ENCODE measurements at regions of chr17 and their contacts with region 1.

Region 1: GRCh38 chr17:21284319-21285163 is at the start of gene MAP2K3:
- DNase-seq: peak; percentile 96 to 98
- ATAC-seq: peak; percentile 64 to 86 (median 74)
- H3K4me3 ChIP-seq: peak within 1 kb of the TSS; percentile 88
- H3K4me3 Mint-ChIP-seq: peak within 1 kb of the TSS; percentile 96
- H3K27ac ChIP-seq: peak within 1 kb of the TSS; percentile 97
- H3K27ac Mint-ChIP-seq: peak within 1 kb of the TSS; percentile 96 to 99
- H3K4me1 ChIP-seq: peaks cover 69% of the 10 kb centered on the region
- H3K4me1 Mint-ChIP-seq: peaks cover 49 to 74% of the 10 kb centered on the region in 2 donors
- H3K27me3 ChIP-seq: no peaks in the 10 kb centered on the region
- H3K27me3 Mint-ChIP-seq: no peaks in the 10 kb centered on the region
- CTCF ChIP-seq: no peak
- total RNA-seq, gene MAP2K3: 139 to 165 (median 162) TPM

Region 2: GRCh38 chr17:21043286-21044232 is 241.0 kb before region 1 on chr17:
- intact Hi-C with region 1: loop called (anchors 1 kb)
- DNase-seq: peak in 1 of 2 donors; percentile 94
- ATAC-seq: peak; percentile 70 to 90 (median 80)
- H3K4me3 ChIP-seq: peak overlapping the region; percentile 90
- H3K4me3 Mint-ChIP-seq: peak overlapping the region; percentile 88
- H3K27ac ChIP-seq: peak overlapping the region; percentile 100
- H3K27ac Mint-ChIP-seq: peak overlapping the region; percentile 91 to 93
- H3K4me1 ChIP-seq: peaks cover 30% of the 10 kb centered on the region
- H3K4me1 Mint-ChIP-seq: peaks cover 16 to 27% of the 10 kb centered on the region in 2 donors
- H3K27me3 ChIP-seq: no peaks in the 10 kb centered on the region
- H3K27me3 Mint-ChIP-seq: peaks cover 4 to 5% of the 10 kb centered on the region in 2 donors
- CTCF ChIP-seq: peak; percentile 89

Region 3: GRCh38 chr17:21072745-21073197 is 211.8 kb before region 1 on chr17:
- intact Hi-C with region 1: no loop called
- DNase-seq: no peak
- ATAC-seq: no peak
- H3K4me3 ChIP-seq: no peak overlapping the region
- H3K4me3 Mint-ChIP-seq: no peak overlapping the region
- H3K27ac ChIP-seq: no peak overlapping the region
- H3K27ac Mint-ChIP-seq: no peak overlapping the region
- H3K4me1 ChIP-seq: no peaks in the 10 kb centered on the region
- H3K4me1 Mint-ChIP-seq: no peaks in the 10 kb centered on the region
- H3K27me3 ChIP-seq: no peaks in the 10 kb centered on the region
- H3K27me3 Mint-ChIP-seq: peaks cover 0 to 6% of the 10 kb centered on the region in 2 donors
- CTCF ChIP-seq: no peak

Region 4: GRCh38 chr17:21140911-21141310 is 143.6 kb before region 1 on chr17:
- intact Hi-C with region 1: no loop called
- DNase-seq: no peak
- ATAC-seq: no peak
- H3K4me3 ChIP-seq: no peak overlapping the region
- H3K4me3 Mint-ChIP-seq: no peak overlapping the region
- H3K27ac ChIP-seq: no peak overlapping the region
- H3K27ac Mint-ChIP-seq: peak overlapping the region in 1 of 2 donors; percentile 18
- H3K4me1 ChIP-seq: peaks cover 3% of the 10 kb centered on the region
- H3K4me1 Mint-ChIP-seq: peaks cover 11 to 16% of the 10 kb centered on the region in 2 donors
- H3K27me3 ChIP-seq: no peaks in the 10 kb centered on the region
- H3K27me3 Mint-ChIP-seq: no peaks in the 10 kb centered on the region
- CTCF ChIP-seq: no peak

Region 5: GRCh38 chr17:21214015-21214776 is 70.3 kb before region 1 on chr17 and contains the start of gene TMEM11:
- intact Hi-C with region 1: loop called (anchors 1 kb)
- DNase-seq: peak; percentile 96 to 97
- ATAC-seq: peak; percentile 88 to 97 (median 90)
- H3K4me3 ChIP-seq: peak within 1 kb of the TSS; percentile 99
- H3K4me3 Mint-ChIP-seq: peak within 1 kb of the TSS; percentile 96
- H3K27ac ChIP-seq: peak within 1 kb of the TSS; percentile 97
- H3K27ac Mint-ChIP-seq: peak within 1 kb of the TSS; percentile 92 to 95
- H3K4me1 ChIP-seq: peaks cover 35% of the 10 kb centered on the region
- H3K4me1 Mint-ChIP-seq: peaks cover 40 to 50% of the 10 kb centered on the region in 2 donors
- H3K27me3 ChIP-seq: no peaks in the 10 kb centered on the region
- H3K27me3 Mint-ChIP-seq: no peaks in the 10 kb centered on the region
- CTCF ChIP-seq: peak; percentile 3
- total RNA-seq, gene TMEM11: 18.4 to 27.0 (median 18.6) TPM

Region 6: GRCh38 chr17:21268596-21269188 is 15.8 kb before region 1 on chr17:
- intact Hi-C with region 1: loop called (anchors 2 kb)
- DNase-seq: no peak
- ATAC-seq: peak in 2 of 3 donors; percentile 6 to 16
- H3K4me3 ChIP-seq: no peak overlapping the region
- H3K4me3 Mint-ChIP-seq: peak overlapping the region; percentile 35
- H3K27ac ChIP-seq: peak overlapping the region; percentile 76
- H3K27ac Mint-ChIP-seq: peak overlapping the region; percentile 85 to 96
- H3K4me1 ChIP-seq: peaks cover 27% of the 10 kb centered on the region
- H3K4me1 Mint-ChIP-seq: peaks cover 18 to 32% of the 10 kb centered on the region in 2 donors
- H3K27me3 ChIP-seq: no peaks in the 10 kb centered on the region
- H3K27me3 Mint-ChIP-seq: no peaks in the 10 kb centered on the region
- CTCF ChIP-seq: no peak

Region 7: DNA sequence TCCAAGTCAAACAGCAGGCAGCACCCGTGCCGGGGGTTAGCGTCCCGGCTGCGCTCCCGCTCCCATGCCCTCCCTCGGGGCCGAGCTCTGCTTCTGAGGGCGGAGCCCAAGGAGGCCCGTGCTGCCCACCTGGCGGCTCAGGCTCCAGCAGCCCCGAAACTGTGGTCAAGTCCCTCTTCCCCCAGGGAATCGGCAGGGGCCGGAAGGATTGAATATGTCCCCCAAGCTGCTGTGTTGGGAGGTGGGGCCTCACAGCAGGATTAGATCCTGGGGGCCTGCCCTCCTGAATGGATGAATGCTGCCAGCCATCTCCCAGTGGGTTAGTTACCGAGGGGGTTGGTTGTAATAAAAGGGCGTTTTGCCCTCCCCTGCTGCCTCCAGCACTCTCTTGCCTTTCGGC is 33.9 kb after region 1 on chr17:
- intact Hi-C with region 1: loop called (anchors 5 kb)
- DNase-seq: no peak
- ATAC-seq: no peak
- H3K4me3 ChIP-seq: no peak overlapping the region
- H3K4me3 Mint-ChIP-seq: no peak overlapping the region
- H3K27ac ChIP-seq: no peak overlapping the region
- H3K27ac Mint-ChIP-seq: no peak overlapping the region
- H3K4me1 ChIP-seq: peaks cover 12% of the 10 kb centered on the region
- H3K4me1 Mint-ChIP-seq: peaks cover 0 to 7% of the 10 kb centered on the region in 2 donors
- H3K27me3 ChIP-seq: no peaks in the 10 kb centered on the region
- H3K27me3 Mint-ChIP-seq: peaks cover 0 to 2% of the 10 kb centered on the region in 2 donors
- CTCF ChIP-seq: no peak

Region 8: DNA sequence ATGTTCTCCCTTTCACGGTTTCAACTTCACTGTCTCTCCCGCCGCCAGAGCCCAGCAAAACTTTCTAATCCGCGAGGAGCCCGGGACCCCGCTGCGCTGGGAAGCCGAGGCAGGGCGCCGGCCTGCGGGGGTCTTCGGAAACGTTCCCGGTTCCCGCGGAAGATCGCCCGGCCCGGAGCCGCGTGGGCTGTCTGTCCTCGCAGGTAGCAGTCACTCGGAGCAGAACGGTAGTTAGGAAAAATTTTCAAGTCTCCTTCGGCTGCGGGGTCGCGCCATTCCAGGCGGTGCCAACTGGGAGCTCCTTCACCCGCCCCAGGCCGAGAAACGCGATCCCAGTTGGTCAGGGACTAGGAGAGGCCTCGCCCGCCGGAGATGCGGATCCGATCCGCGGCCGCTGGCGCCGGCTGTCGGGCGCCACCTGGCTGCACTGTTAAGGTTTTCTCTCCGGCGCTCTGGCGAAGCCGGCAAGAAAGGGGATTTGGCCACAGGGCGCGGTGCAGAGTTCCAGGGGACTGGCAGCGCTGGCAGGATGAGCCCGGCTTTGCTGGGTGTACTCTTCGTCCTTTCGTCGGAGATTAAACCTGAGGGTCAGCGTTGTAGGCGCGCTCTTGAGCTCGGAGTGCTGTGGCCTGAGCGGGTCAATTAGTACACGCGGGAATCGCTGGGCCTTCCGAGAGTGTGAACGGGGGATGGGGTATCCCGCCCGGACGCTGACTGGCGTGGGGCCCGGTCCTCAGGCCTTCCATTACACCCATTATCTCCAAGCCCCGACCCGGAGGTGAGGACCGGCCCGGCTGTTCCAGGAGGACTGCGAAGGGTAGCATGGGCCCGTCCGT is 227.0 kb after region 1 on chr17:
- intact Hi-C with region 1: loop called (anchors 2 kb)
- DNase-seq: peak; percentile 60 to 81
- ATAC-seq: peak; percentile 79 to 81 (median 80)
- H3K4me3 ChIP-seq: peak overlapping the region; percentile 42
- H3K4me3 Mint-ChIP-seq: peak overlapping the region; percentile 82
- H3K27ac ChIP-seq: no peak overlapping the region
- H3K27ac Mint-ChIP-seq: peak overlapping the region in 1 of 2 donors; percentile 44
- H3K4me1 ChIP-seq: peaks cover 16% of the 10 kb centered on the region
- H3K4me1 Mint-ChIP-seq: peaks cover 11 to 17% of the 10 kb centered on the region in 2 donors
- H3K27me3 ChIP-seq: peaks cover 23% of the 10 kb centered on the region
- H3K27me3 Mint-ChIP-seq: peaks cover 31 to 52% of the 10 kb centered on the region in 2 donors
- CTCF ChIP-seq: peak; percentile 80

Measured in natural killer cell (primary cell).